Transverse colon (tissue), 4 donors: ENCODE measurements at regions of chr12 and their contacts with region 1.

Region 1: GRCh38 chr12:2395354-2395977 is 342.7 kb downstream of the CACNA1C start:
- DNase-seq: peak; percentile 47
- H3K4me3 ChIP-seq: no peak overlapping the region
- H3K27ac ChIP-seq: peak overlapping the region; percentile 42 to 70 (median 68)
- H3K4me1 ChIP-seq: peaks cover 3 to 24% (median 5%) of the 10 kb centered on the region in 4 donors
- H3K27me3 ChIP-seq: no peaks in the 10 kb centered on the region
- CTCF ChIP-seq: peak; percentile 68 to 88 (median 81)
- EP300 ChIP-seq: no peak
- POLR2A ChIP-seq: no peak

Region 2: GRCh38 chr12:2364631-2365051 is 30.8 kb before region 1 on chr12:
- in situ Hi-C with region 1: no loop called
- intact Hi-C with region 1: no loop called
- DNase-seq: no peak
- H3K4me3 ChIP-seq: no peak overlapping the region
- H3K27ac ChIP-seq: no peak overlapping the region
- H3K4me1 ChIP-seq: peaks cover 0 to 14% (median 5%) of the 10 kb centered on the region in 4 donors
- H3K27me3 ChIP-seq: no peaks in the 10 kb centered on the region
- CTCF ChIP-seq: no peak
- EP300 ChIP-seq: no peak
- POLR2A ChIP-seq: no peak

Region 3: DNA sequence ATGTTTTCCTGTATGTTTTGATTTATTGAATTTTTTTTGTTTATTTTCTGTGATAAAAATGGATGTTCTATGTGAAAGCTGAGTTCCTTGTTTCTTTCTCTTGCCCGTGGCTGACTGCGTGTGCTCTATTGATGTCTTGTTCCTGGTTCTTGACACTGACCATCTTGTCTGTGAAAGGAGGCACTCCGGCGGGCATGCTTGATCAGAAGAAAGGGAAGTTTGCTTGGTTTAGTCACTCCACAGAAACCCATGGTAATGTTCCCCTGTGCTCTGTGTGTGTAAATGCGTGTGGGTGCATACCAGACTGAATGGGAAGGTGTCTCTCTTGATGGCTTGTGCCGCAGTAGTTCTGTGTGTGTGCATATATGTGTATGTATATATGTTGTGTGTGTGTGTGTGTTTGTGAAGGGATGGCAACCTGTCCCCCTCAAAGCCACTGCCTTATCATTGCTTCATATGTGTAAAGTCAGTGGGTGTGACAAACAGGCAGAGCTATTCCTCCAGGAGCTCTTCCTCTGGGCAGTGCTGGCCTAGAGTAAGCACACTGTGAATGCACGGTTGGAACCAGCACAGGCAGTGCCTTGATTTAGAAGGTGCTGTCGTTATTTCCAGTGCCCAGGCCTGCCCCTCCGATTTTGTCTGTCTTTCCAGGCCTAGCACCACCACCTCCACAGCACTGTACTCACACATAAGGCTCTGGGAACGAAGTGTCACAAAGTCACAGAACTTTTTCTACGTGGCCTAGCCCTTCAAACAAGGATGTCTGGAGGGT is 152.0 kb after region 1 on chr12:
- in situ Hi-C with region 1: no loop called
- intact Hi-C with region 1: no loop called
- DNase-seq: no peak
- H3K4me3 ChIP-seq: no peak overlapping the region
- H3K27ac ChIP-seq: no peak overlapping the region
- H3K4me1 ChIP-seq: no peaks in the 10 kb centered on the region
- H3K27me3 ChIP-seq: no peaks in the 10 kb centered on the region
- CTCF ChIP-seq: no peak
- EP300 ChIP-seq: no peak
- POLR2A ChIP-seq: no peak

Region 4: DNA sequence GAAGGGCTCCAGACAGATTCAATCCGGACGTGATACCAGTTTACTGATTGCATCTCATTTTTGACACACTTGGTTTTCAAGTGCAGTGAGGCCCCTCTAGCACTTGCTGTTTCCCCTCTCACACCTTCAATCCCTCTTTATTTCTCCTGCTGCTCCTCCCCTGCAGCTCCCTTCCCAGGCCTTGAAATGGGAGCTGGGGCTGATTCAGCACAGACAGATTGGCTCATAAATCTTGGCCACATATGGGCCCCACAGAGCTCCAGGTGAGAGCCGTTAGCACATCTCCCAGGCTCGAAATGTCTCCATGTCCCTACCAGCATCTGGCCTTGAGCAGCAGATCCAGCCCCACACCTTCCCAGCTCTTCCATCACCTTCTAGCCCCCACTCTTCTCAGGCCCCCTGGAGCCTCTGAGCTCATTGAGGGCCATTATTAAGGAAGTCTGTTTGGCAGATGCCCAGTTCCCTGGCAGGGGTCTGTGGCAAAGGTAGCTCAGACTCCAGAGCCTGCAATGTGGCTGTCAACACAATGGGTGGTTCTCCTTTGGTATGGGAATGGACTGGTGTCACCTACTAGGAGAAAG is 179.0 kb after region 1 on chr12:
- in situ Hi-C with region 1: loop called in 1 of 4 experiments (anchors 10 kb)
- intact Hi-C with region 1: no loop called
- DNase-seq: no peak
- H3K4me3 ChIP-seq: no peak overlapping the region
- H3K27ac ChIP-seq: no peak overlapping the region
- H3K4me1 ChIP-seq: no peaks in the 10 kb centered on the region
- H3K27me3 ChIP-seq: no peaks in the 10 kb centered on the region
- CTCF ChIP-seq: no peak
- EP300 ChIP-seq: no peak
- POLR2A ChIP-seq: no peak